ENCODE measurements at regions of chr1 and their contacts with region 1.

Region 1: GRCh38 chr1:160251687-160252526 is 10.4 kb downstream of the DCAF8 start:
- DNase-seq: peak; percentile 72 to 90 (median 80)
- H3K4me3 ChIP-seq: no peak overlapping the region
- H3K27ac ChIP-seq: peak overlapping the region in 1 of 5 donors; percentile 22
- H3K4me1 ChIP-seq: peaks cover 0 to 19% of the 10 kb centered on the region in 2 donors
- H3K27me3 ChIP-seq: no peaks in the 10 kb centered on the region
- CTCF ChIP-seq: peak; percentile 55 to 87 (median 84)
- POLR2A ChIP-seq: no peak

Region 2: GRCh38 chr1:160098852-160099561 is 152.9 kb before region 1 on chr1:
- intact Hi-C with region 1: loop called in 1 of 2 experiments (anchors 10 kb)
- DNase-seq: peak; percentile 98 to 99 (median 98)
- H3K4me3 ChIP-seq: peak overlapping the region in 3 of 4 donors; percentile 27 to 85 (median 54)
- H3K27ac ChIP-seq: peak overlapping the region; percentile 55 to 90 (median 86)
- H3K4me1 ChIP-seq: peaks cover 10 to 18% of the 10 kb centered on the region in 2 donors
- H3K27me3 ChIP-seq: no peaks in the 10 kb centered on the region
- CTCF ChIP-seq: no peak
- POLR2A ChIP-seq: peak in 1 of 2 donors; percentile 71

Region 3: DNA sequence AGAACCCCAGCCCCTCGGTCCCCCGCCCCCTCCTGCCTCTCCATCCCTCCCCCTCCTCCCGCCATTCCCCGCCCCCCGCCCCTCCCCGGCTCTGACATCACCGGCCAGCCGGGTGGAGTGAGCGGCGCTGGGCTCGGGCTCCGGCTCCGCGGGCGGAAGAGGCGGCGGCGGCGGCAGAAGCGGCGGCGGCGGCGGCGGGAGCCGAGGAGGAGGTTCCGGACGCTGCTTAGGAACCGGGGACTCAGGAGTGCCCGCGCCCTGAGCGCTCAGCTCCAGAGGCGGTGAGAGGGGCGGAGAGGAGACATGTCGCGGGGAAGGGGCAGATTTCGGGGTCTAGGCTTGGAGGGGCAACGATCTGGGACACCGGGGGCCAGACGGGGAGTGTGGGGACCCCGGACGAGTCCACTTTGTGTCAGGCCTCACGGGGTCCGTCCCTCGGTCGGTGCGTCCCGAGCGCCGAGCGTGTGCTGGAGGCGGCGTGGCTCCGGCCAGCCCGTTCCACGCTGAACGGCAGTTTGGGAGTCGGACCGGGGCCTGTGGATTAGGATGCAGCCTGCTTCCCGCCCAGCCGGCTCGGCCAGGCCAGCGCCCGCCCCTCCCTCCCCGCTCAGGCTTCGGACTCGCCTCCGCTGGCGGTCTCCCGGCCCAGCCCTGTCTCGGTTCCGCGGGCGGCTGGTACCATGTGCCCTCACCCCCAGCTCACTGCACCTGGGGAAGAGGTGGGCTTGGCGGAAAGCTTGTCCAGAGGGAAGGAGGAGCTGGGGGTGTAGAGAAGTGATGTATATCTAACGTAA is 46.5 kb before region 1 on chr1 and contains the start of gene PEA15:
- intact Hi-C with region 1: loop called in 1 of 2 experiments (anchors 5 kb)
- DNase-seq: peak; percentile 56 to 81 (median 73)
- H3K4me3 ChIP-seq: peak within 1 kb of the TSS in 3 of 4 donors; percentile 42 to 85 (median 74)
- H3K27ac ChIP-seq: peak within 1 kb of the TSS; percentile 59 to 96 (median 78)
- H3K4me1 ChIP-seq: peaks cover 16 to 51% of the 10 kb centered on the region in 2 donors
- H3K27me3 ChIP-seq: no peaks in the 10 kb centered on the region
- CTCF ChIP-seq: no peak
- POLR2A ChIP-seq: peak; percentile 72 to 75
- total RNA-seq, gene PEA15: 40.6 to 163 (median 92.3) TPM